Motor neuron (in vitro differentiated cells): ENCODE measurements at regions of chr19 and their contacts with region 1.

Region 1: GRCh38 chr19:9796113-9796773 is 22.6 kb downstream of the FBXL12 start:
- ATAC-seq: peak in 7 of 8 experiments; percentile 9 to 47 (median 26)
- H3K4me3 ChIP-seq: no peak overlapping the region
- H3K27ac ChIP-seq: no peak overlapping the region
- H3K4me1 ChIP-seq: peaks cover 0 to 1% of the 10 kb centered on the region in 2 donors

Region 2: DNA sequence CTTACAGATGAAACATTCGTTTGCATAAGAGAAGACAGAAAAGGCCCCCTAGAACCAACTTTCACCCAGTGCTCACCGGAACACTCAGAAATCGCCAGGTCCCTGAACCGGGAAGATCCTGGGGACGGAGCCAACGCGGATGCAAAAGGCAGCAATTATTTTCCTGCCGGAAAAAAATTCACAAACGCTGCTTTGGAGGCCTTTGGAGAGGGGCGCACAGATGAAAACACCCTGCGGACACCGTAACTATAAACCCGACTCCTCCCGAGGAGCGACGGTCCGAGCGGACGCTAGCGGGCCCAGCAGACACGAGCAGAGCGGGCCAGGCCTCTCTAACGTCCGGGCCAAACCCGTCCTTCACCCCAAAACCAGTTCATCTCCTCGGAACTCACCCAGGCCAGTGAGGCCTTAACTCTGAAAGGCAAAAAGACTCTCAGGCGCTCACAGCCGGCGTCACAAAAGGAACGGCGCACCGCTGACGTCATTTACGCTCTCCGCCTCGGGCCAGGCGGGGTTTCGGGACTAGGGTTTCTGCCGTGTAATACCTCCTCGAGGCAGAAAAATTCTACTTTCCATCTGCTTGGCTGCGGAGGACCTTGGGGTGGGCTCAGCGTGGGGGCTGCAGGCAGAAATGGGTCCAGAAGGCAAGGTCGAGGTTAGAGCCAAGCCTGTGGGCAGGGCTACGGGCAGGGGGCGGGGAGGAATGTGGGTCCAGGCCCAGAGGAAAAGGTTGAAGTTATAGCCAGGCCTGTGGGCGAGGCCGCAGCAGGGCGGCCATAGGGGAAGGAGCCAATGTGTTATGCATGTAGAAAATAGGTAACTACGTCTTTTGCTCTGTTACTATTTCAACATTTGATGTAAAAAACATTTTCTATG is 257.8 kb before region 1 on chr19 and contains the start of gene ZNF426:
- in situ Hi-C with region 1: no loop called
- ATAC-seq: peak; percentile 93 to 98 (median 96)
- H3K4me3 ChIP-seq: peak within 1 kb of the TSS; percentile 60 to 93 (median 88)
- H3K27ac ChIP-seq: peak within 1 kb of the TSS; percentile 96
- H3K4me1 ChIP-seq: peaks cover 6 to 13% of the 10 kb centered on the region in 2 donors
- total RNA-seq, gene ZNF426: 10.4 to 21.3 (median 16.2) TPM

Region 3: GRCh38 chr19:9621156-9622037 is 174.8 kb before region 1 on chr19 and contains the start of gene ZNF561:
- in situ Hi-C with region 1: loop called in 7 of 9 experiments (anchors 10 to 25 kb)
- ATAC-seq: peak; percentile 89 to 94 (median 91)
- H3K4me3 ChIP-seq: peak within 1 kb of the TSS; percentile 80 to 98 (median 91)
- H3K27ac ChIP-seq: peak within 1 kb of the TSS; percentile 100
- H3K4me1 ChIP-seq: peaks cover 7 to 10% of the 10 kb centered on the region in 2 donors
- total RNA-seq, gene ZNF561: 23.2 to 60.3 (median 33.7) TPM

Region 4: DNA sequence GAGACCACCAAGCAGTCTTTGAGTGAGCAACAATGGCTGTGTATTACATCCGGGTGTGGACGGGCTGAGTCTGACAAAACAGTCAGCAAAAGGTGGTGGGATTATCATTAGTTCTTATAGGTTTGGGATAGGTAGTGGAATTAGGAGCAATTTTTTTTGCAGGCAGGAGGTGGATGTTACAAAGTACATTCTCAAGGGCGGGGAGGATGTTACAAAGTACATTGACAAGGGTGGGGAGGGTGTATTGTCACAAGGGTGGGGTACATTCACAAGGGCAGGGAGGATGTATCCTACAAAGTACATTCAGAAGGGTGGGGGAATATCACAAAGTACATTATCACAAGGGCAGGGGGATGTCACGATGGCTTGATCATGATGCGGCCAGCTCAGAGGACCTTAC is 160.2 kb before region 1 on chr19:
- in situ Hi-C with region 1: loop called in 4 of 9 experiments (anchors 10 to 25 kb)
- ATAC-seq: no peak
- H3K4me3 ChIP-seq: no peak overlapping the region
- H3K27ac ChIP-seq: no peak overlapping the region
- H3K4me1 ChIP-seq: no peaks in the 10 kb centered on the region